Adrenal gland (tissue), 19 donors: ENCODE measurements at regions of chr14 and their contacts with region 1.

Region 1: DNA sequence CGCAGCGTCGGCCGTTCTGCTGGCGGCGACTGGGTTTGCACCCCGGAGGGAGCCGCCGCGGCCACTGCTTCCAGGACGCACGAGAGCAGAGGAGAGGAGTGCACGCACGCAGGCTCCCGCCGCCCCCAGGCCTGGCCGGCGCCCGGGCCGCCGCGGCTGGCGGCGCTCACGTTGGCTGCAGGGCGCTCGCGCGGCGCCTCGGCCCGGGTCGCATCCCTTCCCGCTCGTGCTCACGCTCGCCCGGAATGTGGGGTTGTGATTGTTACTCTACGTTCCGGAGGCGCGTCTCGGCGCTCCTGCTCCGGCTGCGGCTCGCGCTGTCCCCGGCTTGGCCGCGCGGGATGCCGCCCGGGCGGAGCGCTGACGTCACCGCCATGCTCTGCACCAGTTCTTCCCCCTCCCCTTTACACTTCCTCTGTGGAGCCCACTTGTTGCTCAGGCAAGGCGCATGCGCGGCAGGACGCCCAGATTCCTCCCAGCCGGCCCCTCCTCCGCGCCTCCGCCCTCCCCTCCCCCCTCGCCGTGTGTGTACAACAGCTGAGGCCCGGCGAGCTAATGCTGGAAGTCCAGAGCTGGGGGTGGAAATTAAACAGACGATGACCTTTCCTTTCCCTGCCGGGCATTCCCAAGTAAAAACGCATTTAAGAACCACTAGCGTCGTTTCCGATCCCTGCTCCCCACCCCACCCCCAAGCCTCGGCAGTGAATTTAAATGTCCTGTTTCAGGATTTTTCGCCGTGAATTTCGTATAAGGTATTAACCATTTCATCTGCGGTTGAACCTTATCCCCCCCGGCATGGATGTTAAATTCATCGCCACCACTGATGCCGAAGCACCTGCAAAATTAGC is at the start of gene IRF2BPL:
- DNase-seq: peak; percentile 99 to 100 (median 99)
- H3K4me3 ChIP-seq: peak within 1 kb of the TSS in 3 of 4 donors; percentile 85 to 90 (median 86)
- H3K27ac ChIP-seq: peak within 1 kb of the TSS; percentile 99 to 100 (median 99)
- H3K4me1 ChIP-seq: peaks cover 52 to 66% of the 10 kb centered on the region in 2 donors
- H3K27me3 ChIP-seq: no peaks in the 10 kb centered on the region
- CTCF ChIP-seq: peak in 1 of 6 experiments; percentile 29
- POLR2A ChIP-seq: peak; percentile 95 to 98
- total RNA-seq, gene IRF2BPL: 20.3 to 104 (median 85.1) TPM

Region 2: DNA sequence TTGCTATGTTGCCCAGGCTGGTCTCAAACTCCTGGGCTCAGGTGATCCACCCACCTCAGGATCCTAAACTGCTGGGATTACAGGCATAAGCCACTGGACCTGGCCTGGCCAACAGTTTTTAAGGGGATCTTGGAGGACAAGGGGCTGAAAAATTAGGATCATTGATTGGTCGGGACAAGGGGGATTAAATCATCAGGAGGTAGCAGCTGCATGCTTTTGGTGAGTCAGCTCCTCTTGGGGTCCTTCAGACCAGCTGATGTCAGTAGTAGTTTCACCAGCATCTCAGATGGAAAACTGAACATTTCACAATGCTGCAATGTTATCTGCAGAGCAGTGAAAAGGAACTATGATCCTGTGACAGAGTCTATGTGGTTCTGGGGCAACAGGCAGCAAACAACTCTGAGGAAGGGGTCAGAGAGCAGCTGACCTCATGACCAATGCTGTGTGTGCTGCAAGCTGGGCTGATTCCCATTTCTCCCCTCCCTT is 196.1 kb before region 1 on chr14:
- intact Hi-C with region 1: no loop called
- DNase-seq: peak in 1 of 7 donors; percentile 30
- H3K4me3 ChIP-seq: no peak overlapping the region
- H3K27ac ChIP-seq: peak overlapping the region in 2 of 5 donors; percentile 43 to 52
- H3K4me1 ChIP-seq: no peaks in the 10 kb centered on the region
- H3K27me3 ChIP-seq: no peaks in the 10 kb centered on the region
- CTCF ChIP-seq: no peak
- POLR2A ChIP-seq: no peak

Region 3: GRCh38 chr14:76956316-76957090 is 72.1 kb before region 1 on chr14:
- intact Hi-C with region 1: loop called (anchors 5 kb)
- DNase-seq: peak; percentile 95 to 98 (median 96)
- H3K4me3 ChIP-seq: peak overlapping the region in 1 of 4 donors; percentile 32
- H3K27ac ChIP-seq: peak overlapping the region; percentile 96 to 99 (median 97)
- H3K4me1 ChIP-seq: peaks cover 42 to 52% of the 10 kb centered on the region in 2 donors
- H3K27me3 ChIP-seq: no peaks in the 10 kb centered on the region
- CTCF ChIP-seq: peak in 4 of 6 experiments; percentile 30 to 61 (median 38)
- POLR2A ChIP-seq: peak; percentile 35 to 65

Region 4: GRCh38 chr14:77139540-77140358 is 111.1 kb after region 1 on chr14:
- intact Hi-C with region 1: no loop called
- DNase-seq: no peak
- H3K4me3 ChIP-seq: no peak overlapping the region
- H3K27ac ChIP-seq: no peak overlapping the region
- H3K4me1 ChIP-seq: peaks cover 8 to 16% of the 10 kb centered on the region in 2 donors
- H3K27me3 ChIP-seq: peaks cover 67% of the 10 kb centered on the region
- CTCF ChIP-seq: peak in 4 of 6 experiments; percentile 14 to 31 (median 21)
- POLR2A ChIP-seq: no peak

Region 5: GRCh38 chr14:77212943-77213678 is 184.5 kb after region 1 on chr14:
- intact Hi-C with region 1: no loop called
- DNase-seq: peak; percentile 31 to 79 (median 52)
- H3K4me3 ChIP-seq: no peak overlapping the region
- H3K27ac ChIP-seq: no peak overlapping the region
- H3K4me1 ChIP-seq: no peaks in the 10 kb centered on the region
- H3K27me3 ChIP-seq: no peaks in the 10 kb centered on the region
- CTCF ChIP-seq: peak; percentile 36 to 65 (median 63)
- POLR2A ChIP-seq: no peak

Region 6: DNA sequence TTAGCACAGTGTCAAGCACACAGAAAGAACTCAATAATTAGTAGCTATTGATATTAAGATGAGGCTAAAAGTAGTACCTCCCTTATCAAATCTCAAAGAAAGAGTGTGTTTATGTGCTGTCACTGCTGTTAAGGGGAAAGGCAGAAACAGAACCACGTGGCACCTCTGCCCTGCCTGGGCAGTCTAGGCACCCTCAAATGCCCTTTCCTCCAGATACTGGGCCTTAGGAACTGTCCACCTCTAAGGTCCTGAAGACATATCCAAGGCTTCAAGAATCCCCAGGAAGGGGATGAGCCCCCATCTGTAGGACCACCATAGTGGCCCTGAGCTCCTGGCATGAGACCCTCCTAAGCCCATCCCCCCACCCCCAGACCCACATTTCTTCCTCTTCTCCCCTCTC is 213.3 kb after region 1 on chr14:
- intact Hi-C with region 1: no loop called
- DNase-seq: no peak
- H3K4me3 ChIP-seq: no peak overlapping the region
- H3K27ac ChIP-seq: no peak overlapping the region
- H3K4me1 ChIP-seq: no peaks in the 10 kb centered on the region
- H3K27me3 ChIP-seq: no peaks in the 10 kb centered on the region
- CTCF ChIP-seq: no peak
- POLR2A ChIP-seq: no peak